Caco-2 (cell line): ENCODE measurements at regions of chr6 and their contacts with region 1.

Region 1: DNA sequence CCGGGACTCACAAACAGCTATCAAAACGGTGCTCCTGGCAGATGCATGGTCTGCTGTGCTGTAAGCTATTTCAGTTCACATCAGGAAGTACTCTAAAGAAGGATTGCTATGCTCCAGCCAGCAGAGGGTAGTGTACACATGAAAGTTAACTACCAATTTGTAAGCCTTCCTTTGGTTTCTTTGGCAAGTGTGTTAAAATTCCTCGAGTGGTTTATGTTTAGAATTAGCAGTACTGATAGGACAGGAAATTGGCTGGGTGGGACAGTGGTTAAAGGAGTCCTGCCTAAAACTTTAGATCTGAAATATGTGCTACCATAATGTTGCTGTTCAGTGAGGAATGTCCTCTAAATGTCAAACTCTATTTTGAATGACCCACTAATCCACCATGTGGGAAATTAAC is 47.4 kb downstream of the TRMT11 start:
- DNase-seq: peak; percentile 60 to 68
- H3K4me3 ChIP-seq: no peak overlapping the region
- H3K4me3 Mint-ChIP-seq: no peak overlapping the region
- H3K27ac Mint-ChIP-seq: peak overlapping the region; percentile 48
- H3K4me1 ChIP-seq: peaks cover 54% of the 10 kb centered on the region
- H3K4me1 Mint-ChIP-seq: peaks cover 37% of the 10 kb centered on the region
- H3K27me3 ChIP-seq: no peaks in the 10 kb centered on the region
- H3K27me3 Mint-ChIP-seq: no peaks in the 10 kb centered on the region
- CTCF ChIP-seq: peak; percentile 47 to 78

Region 2: GRCh38 chr6:126112144-126112632 is 78.5 kb after region 1 on chr6:
- CTCF ChIA-PET with region 1: interaction called, 19 read pairs
- POLR2A ChIA-PET with region 1: no interaction called
- intact Hi-C with region 1: loop called (anchors 1 kb)
- DNase-seq: peak in 1 of 2 experiments; percentile 31
- H3K4me3 ChIP-seq: no peak overlapping the region
- H3K4me3 Mint-ChIP-seq: no peak overlapping the region
- H3K27ac Mint-ChIP-seq: no peak overlapping the region
- H3K4me1 ChIP-seq: no peaks in the 10 kb centered on the region
- H3K4me1 Mint-ChIP-seq: no peaks in the 10 kb centered on the region
- H3K27me3 ChIP-seq: no peaks in the 10 kb centered on the region
- H3K27me3 Mint-ChIP-seq: no peaks in the 10 kb centered on the region
- CTCF ChIP-seq: peak in 1 of 2 experiments; percentile 13

Region 3: GRCh38 chr6:126176282-126176681 is 142.6 kb after region 1 on chr6:
- CTCF ChIA-PET with region 1: interaction called, 5 read pairs
- POLR2A ChIA-PET with region 1: no interaction called
- intact Hi-C with region 1: loop called (anchors 1 kb)
- DNase-seq: peak in 1 of 2 experiments; percentile 34
- H3K4me3 ChIP-seq: no peak overlapping the region
- H3K4me3 Mint-ChIP-seq: no peak overlapping the region
- H3K27ac Mint-ChIP-seq: no peak overlapping the region
- H3K4me1 ChIP-seq: peaks cover 6% of the 10 kb centered on the region
- H3K4me1 Mint-ChIP-seq: peaks cover 2% of the 10 kb centered on the region
- H3K27me3 ChIP-seq: no peaks in the 10 kb centered on the region
- H3K27me3 Mint-ChIP-seq: no peaks in the 10 kb centered on the region
- CTCF ChIP-seq: peak; percentile 29 to 49

Region 4: GRCh38 chr6:126339796-126340609 is 306.3 kb after region 1 on chr6 and contains the start of gene CENPW:
- CTCF ChIA-PET with region 1: no interaction called
- POLR2A ChIA-PET with region 1: no interaction called
- intact Hi-C with region 1: loop called (anchors 1 kb)
- DNase-seq: peak; percentile 94 to 96
- H3K4me3 ChIP-seq: peak within 1 kb of the TSS; percentile 79
- H3K4me3 Mint-ChIP-seq: no peak within 1 kb of the TSS
- H3K27ac Mint-ChIP-seq: no peak within 1 kb of the TSS
- H3K4me1 ChIP-seq: 0 out of 2 replicates have a peak, but pooled peaks cover 4% of the 10 kb centered on the region
- H3K4me1 Mint-ChIP-seq: peaks cover 15% of the 10 kb centered on the region
- H3K27me3 ChIP-seq: no peaks in the 10 kb centered on the region
- H3K27me3 Mint-ChIP-seq: no peaks in the 10 kb centered on the region
- CTCF ChIP-seq: no peak
- total RNA-seq, gene CENPW: 64.4 and 70.7 TPM in 2 replicates